Stomach (tissue), 19 donors: ENCODE measurements at regions of chr13 and their contacts with region 1.

Region 1: GRCh38 chr13:94617389-94618000 is 15.8 kb downstream of the GPR180 start:
- DNase-seq: peak in 1 of 2 donors; percentile 65
- H3K4me3 ChIP-seq: no peak overlapping the region
- H3K27ac ChIP-seq: no peak overlapping the region
- H3K4me1 ChIP-seq: no peaks in the 10 kb centered on the region
- H3K27me3 ChIP-seq: no peaks in the 10 kb centered on the region
- CTCF ChIP-seq: peak in 4 of 7 experiments; percentile 40 to 62 (median 54)
- EP300 ChIP-seq: no peak
- POLR2A ChIP-seq: no peak

Region 2: GRCh38 chr13:94435604-94436226 is 181.8 kb before region 1 on chr13:
- intact Hi-C with region 1: loop called (anchors 10 kb)
- DNase-seq: peak in 1 of 2 donors; percentile 77
- H3K4me3 ChIP-seq: no peak overlapping the region
- H3K27ac ChIP-seq: no peak overlapping the region
- H3K4me1 ChIP-seq: peaks cover 0 to 7% (median 0%) of the 10 kb centered on the region in 4 donors
- H3K27me3 ChIP-seq: no peaks in the 10 kb centered on the region
- CTCF ChIP-seq: peak in 5 of 7 experiments; percentile 44 to 59 (median 53)
- EP300 ChIP-seq: no peak
- POLR2A ChIP-seq: no peak

Region 3: DNA sequence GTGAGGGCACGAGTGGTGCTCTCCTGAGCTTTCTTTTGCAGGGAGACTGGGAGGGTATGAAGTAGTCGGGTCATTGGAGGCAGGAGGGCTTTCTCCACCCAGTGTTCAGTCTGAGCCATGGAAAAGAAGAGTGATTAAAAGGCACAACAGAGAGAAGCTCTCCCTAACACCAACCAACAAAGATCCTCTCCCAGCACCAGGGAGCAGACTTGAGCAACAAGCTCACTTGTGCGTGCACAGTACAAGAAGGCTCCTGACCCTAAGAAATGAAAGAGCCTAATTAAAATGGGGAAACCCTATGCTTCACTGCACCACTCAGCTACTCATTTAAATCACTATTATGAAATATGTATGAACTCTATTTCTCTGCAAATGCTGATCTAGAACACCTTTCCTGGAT is 371.2 kb after region 1 on chr13:
- intact Hi-C with region 1: no loop called
- DNase-seq: no peak
- H3K4me3 ChIP-seq: no peak overlapping the region
- H3K27ac ChIP-seq: no peak overlapping the region
- H3K4me1 ChIP-seq: no peaks in the 10 kb centered on the region
- H3K27me3 ChIP-seq: peaks cover 0 to 12% (median 0%) of the 10 kb centered on the region in 3 donors
- CTCF ChIP-seq: no peak
- EP300 ChIP-seq: no peak
- POLR2A ChIP-seq: no peak